ENCODE measurements at regions of chr7 and their contacts with region 1.

Region 1: GRCh38 chr7:28481091-28481926 is 69.0 kb downstream of the CREB5 start:
- DNase-seq: peak; percentile 85
- ATAC-seq: peak; percentile 63
- H3K4me3 ChIP-seq: no peak overlapping the region
- H3K27ac ChIP-seq: peak overlapping the region; percentile 72
- H3K4me1 ChIP-seq: peaks cover 41% of the 10 kb centered on the region
- H3K27me3 ChIP-seq: no peaks in the 10 kb centered on the region
- CTCF ChIP-seq: no peak
- EP300 ChIP-seq: peak; percentile 88 to 94
- POLR2A ChIP-seq: no peak
- RAD21 ChIP-seq: peak; percentile 26

Region 2: GRCh38 chr7:28389504-28390395 is 91.6 kb before region 1 on chr7:
- CTCF ChIA-PET with region 1: interaction called, 3 read pairs
- POLR2A ChIA-PET with region 1: no interaction called
- RAD21 ChIA-PET with region 1: no interaction called
- SMC1A ChIA-PET with region 1: interaction called, 6 read pairs
- in situ Hi-C with region 1: no loop called
- intact Hi-C with region 1: loop called (anchors 1 kb)
- DNase-seq: no peak
- ATAC-seq: peak; percentile 64
- H3K4me3 ChIP-seq: no peak overlapping the region
- H3K27ac ChIP-seq: no peak overlapping the region
- H3K4me1 ChIP-seq: no peaks in the 10 kb centered on the region
- H3K27me3 ChIP-seq: no peaks in the 10 kb centered on the region
- CTCF ChIP-seq: peak; percentile 56 to 71 (median 61)
- EP300 ChIP-seq: no peak
- POLR2A ChIP-seq: no peak
- RAD21 ChIP-seq: peak; percentile 86

Region 3: DNA sequence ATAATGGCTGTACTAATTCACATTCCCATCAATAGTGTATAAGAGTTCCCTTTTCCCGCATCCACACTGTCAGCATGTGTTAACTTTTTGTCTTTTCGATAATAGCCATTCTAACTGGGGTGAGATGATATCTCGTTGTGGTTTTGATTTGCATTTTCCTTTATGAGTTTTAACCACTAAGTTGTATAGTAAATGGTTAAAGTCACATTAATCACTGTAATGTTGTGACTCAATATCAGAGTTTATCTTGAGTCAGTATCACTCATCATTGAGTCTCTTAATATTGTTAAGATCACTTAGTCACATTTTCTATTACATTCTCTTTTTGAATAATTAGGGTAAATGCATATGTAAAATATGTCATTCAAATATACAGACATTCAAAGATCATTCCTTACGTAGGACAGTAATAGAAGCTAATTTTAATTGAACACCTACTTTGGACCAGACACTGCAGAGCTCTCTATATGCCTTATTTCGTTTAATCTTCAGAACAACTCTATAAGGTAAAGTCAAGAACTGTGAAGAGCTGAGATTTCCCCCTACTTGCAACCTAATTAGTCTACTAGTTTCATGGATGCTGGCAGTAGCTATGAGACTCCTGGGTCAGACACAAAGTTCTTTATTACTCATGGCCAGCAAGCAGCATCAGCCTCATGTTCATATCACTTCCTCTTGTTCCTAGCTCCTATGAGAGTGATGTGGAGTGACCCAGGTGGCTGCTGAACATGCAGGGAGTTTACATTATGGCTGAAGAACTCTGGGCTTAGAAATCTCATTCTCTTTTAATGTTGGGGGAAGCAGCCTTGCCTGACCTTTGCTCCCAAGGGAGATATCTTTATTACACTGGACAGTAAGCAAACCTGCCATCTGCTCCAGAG is 38.5 kb before region 1 on chr7:
- CTCF ChIA-PET with region 1: interaction called, 4 read pairs
- POLR2A ChIA-PET with region 1: interaction called, 5 read pairs
- RAD21 ChIA-PET with region 1: interaction called, 29 read pairs
- SMC1A ChIA-PET with region 1: interaction called, 56 read pairs
- in situ Hi-C with region 1: no loop called
- intact Hi-C with region 1: loop called (anchors 1 kb)
- DNase-seq: no peak
- ATAC-seq: peak; percentile 92
- H3K4me3 ChIP-seq: no peak overlapping the region
- H3K27ac ChIP-seq: no peak overlapping the region
- H3K4me1 ChIP-seq: no peaks in the 10 kb centered on the region; the same call in 1 of the 2 replicates
- H3K27me3 ChIP-seq: no peaks in the 10 kb centered on the region; a peak in 1 of 4 replicates
- CTCF ChIP-seq: no peak
- EP300 ChIP-seq: peak in 1 of 2 experiments; percentile 63; a peak in 1 of 4 replicates
- POLR2A ChIP-seq: no peak
- RAD21 ChIP-seq: no peak

Region 4: GRCh38 chr7:28509251-28510022 is 28.1 kb after region 1 on chr7:
- CTCF ChIA-PET with region 1: interaction called, 5 read pairs
- POLR2A ChIA-PET with region 1: interaction called, 18 read pairs
- RAD21 ChIA-PET with region 1: interaction called, 85 read pairs
- SMC1A ChIA-PET with region 1: interaction called, 153 read pairs
- in situ Hi-C with region 1: no loop called
- intact Hi-C with region 1: loop called (anchors 1 kb)
- DNase-seq: peak; percentile 45
- ATAC-seq: peak; percentile 95
- H3K4me3 ChIP-seq: peak overlapping the region; percentile 14; the same call in 1 of the 2 replicates
- H3K27ac ChIP-seq: peak overlapping the region; percentile 70
- H3K4me1 ChIP-seq: peaks cover 17% of the 10 kb centered on the region
- H3K27me3 ChIP-seq: no peaks in the 10 kb centered on the region
- CTCF ChIP-seq: no peak
- EP300 ChIP-seq: peak; percentile 65 to 74
- POLR2A ChIP-seq: peak; percentile 43; the same call in 1 of the 2 replicates
- RAD21 ChIP-seq: peak; percentile 24; the same call in 1 of the 2 replicates

Region 5: GRCh38 chr7:28573059-28573553 is 91.8 kb after region 1 on chr7:
- CTCF ChIA-PET with region 1: interaction called, 17 read pairs
- POLR2A ChIA-PET with region 1: interaction called, 81 read pairs
- RAD21 ChIA-PET with region 1: interaction called, 192 read pairs
- SMC1A ChIA-PET with region 1: interaction called, 177 read pairs
- in situ Hi-C with region 1: no loop called
- intact Hi-C with region 1: loop called (anchors 1 kb)
- DNase-seq: no peak
- ATAC-seq: peak; percentile 40
- H3K4me3 ChIP-seq: no peak overlapping the region
- H3K27ac ChIP-seq: peak overlapping the region; percentile 29
- H3K4me1 ChIP-seq: peaks cover 23% of the 10 kb centered on the region
- H3K27me3 ChIP-seq: no peaks in the 10 kb centered on the region
- CTCF ChIP-seq: no peak
- EP300 ChIP-seq: peak in 1 of 2 experiments; percentile 9; a peak in 2 of 4 replicates
- POLR2A ChIP-seq: no peak; the same call in 1 of the 2 replicates
- RAD21 ChIP-seq: no peak

Region 6: GRCh38 chr7:28621369-28621841 is 140.1 kb after region 1 on chr7:
- CTCF ChIA-PET with region 1: interaction called, 11 read pairs
- POLR2A ChIA-PET with region 1: interaction called, 8 read pairs
- RAD21 ChIA-PET with region 1: interaction called, 40 read pairs
- SMC1A ChIA-PET with region 1: interaction called, 39 read pairs
- in situ Hi-C with region 1: loop called (anchors 5 kb)
- intact Hi-C with region 1: loop called (anchors 1 kb)
- DNase-seq: peak; percentile 45
- ATAC-seq: peak; percentile 82
- H3K4me3 ChIP-seq: no peak overlapping the region
- H3K27ac ChIP-seq: peak overlapping the region; percentile 45; the same call in 1 of the 2 replicates
- H3K4me1 ChIP-seq: peaks cover 3% of the 10 kb centered on the region; the same call in 1 of the 2 replicates
- H3K27me3 ChIP-seq: no peaks in the 10 kb centered on the region
- CTCF ChIP-seq: no peak
- EP300 ChIP-seq: peak; percentile 76 to 90; a peak in 3 of 4 replicates
- POLR2A ChIP-seq: no peak
- RAD21 ChIP-seq: 0 out of 2 replicates have a peak, but pooled peaks have one; percentile 19

Region 7: GRCh38 chr7:28815369-28815927 is 334.1 kb after region 1 on chr7:
- CTCF ChIA-PET with region 1: interaction called, 5 read pairs
- POLR2A ChIA-PET with region 1: no interaction called
- RAD21 ChIA-PET with region 1: interaction called, 7 read pairs
- SMC1A ChIA-PET with region 1: interaction called, 4 read pairs
- in situ Hi-C with region 1: no loop called
- intact Hi-C with region 1: loop called (anchors 10 kb)
- DNase-seq: peak; percentile 34
- ATAC-seq: peak; percentile 69
- H3K4me3 ChIP-seq: peak overlapping the region; percentile 14; the same call in 1 of the 2 replicates
- H3K27ac ChIP-seq: peak overlapping the region; percentile 80
- H3K4me1 ChIP-seq: peaks cover 37% of the 10 kb centered on the region
- H3K27me3 ChIP-seq: no peaks in the 10 kb centered on the region
- CTCF ChIP-seq: no peak
- EP300 ChIP-seq: no peak
- POLR2A ChIP-seq: no peak
- RAD21 ChIP-seq: no peak

Region 8: DNA sequence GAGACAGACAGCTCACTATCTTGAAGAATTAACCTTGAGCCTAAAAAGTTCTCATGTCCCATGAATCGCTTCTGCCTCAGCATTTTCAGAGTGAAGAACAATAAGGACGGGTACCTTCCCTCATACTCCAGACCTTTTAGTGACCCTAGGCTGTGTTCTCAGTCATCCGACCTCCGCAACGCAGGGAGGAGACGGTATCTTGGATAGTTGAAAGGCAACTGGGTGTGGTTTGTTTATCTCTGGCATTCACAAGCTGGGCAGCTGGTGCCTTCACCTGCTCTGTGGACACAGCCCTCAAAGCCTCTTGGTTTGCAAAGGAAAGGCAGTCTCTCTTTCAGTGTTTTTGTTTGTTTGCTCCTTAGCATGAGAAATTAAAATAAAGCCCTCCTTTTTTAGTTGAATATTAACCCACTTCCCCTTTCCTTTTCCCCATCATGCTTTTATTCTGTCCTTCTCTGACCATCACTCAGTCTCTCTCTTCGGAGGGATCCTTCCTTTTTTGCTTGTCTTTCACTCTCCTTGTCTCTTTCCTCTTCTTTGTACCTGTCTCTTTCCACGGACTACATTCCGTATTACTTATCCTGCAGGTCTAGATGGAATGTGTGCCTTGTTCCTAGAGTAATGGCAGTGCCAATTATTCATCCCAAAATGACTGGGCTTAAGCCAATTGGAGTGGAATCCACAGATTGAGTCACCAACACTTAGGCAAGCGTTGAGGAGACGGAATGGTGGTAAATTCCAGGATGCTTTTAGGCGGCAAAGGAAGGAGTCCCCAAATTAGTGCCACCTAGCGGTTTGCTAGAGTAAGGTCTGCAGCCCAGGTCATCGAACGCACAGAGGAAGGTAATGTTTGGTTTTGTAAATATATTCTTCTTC is 1128.1 kb after region 1 on chr7:
- CTCF ChIA-PET with region 1: no interaction called
- POLR2A ChIA-PET with region 1: no interaction called
- RAD21 ChIA-PET with region 1: no interaction called
- SMC1A ChIA-PET with region 1: no interaction called
- in situ Hi-C with region 1: no loop called
- intact Hi-C with region 1: no loop called
- DNase-seq: no peak
- ATAC-seq: 0 out of 3 replicates have a peak, but pooled peaks have one; percentile 53
- H3K4me3 ChIP-seq: no peak overlapping the region
- H3K27ac ChIP-seq: no peak overlapping the region
- H3K4me1 ChIP-seq: no peaks in the 10 kb centered on the region
- H3K27me3 ChIP-seq: peaks cover 0 to 2% of the 10 kb centered on the region in 2 experiments; a peak in 1 of 4 replicates
- CTCF ChIP-seq: peak; percentile 40 to 63 (median 54)
- EP300 ChIP-seq: no peak
- POLR2A ChIP-seq: no peak
- RAD21 ChIP-seq: no peak